ENCODE measurements at regions of chr3 and their contacts with region 1.

Region 1: DNA sequence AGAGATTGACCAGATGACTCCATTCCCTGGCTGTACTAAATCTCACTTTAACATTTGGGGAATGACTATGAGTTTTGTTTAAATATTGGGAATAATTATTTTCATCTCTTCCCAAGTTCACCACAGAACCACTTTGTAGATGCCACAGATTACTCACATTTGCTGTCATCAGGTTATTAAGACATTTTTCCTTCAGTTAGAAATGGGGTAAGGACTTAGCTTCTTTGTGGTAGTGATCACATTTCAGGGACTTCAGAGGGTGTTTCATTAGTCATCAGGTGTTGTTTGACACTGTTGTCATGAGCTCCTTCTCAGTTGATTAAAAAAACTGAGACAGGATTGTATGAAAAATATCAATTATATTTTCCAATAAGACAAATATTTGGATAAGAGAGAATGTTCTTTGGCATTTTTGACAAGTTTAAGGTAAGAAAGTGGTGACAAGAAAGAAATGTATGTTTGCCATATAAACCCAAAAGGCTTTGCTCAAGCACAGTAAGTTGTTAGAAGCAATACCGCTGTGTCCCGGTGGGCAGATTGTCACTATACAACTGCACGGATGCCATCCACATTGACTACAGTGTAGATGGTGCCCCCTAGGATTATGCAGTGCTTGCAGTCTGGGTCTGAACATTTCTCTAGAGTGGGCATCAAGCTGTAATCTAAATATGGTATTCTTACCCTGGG is 22.3 kb downstream of the FBXL2 start:
- DNase-seq: no peak
- H3K4me3 ChIP-seq: no peak overlapping the region
- H3K27ac ChIP-seq: no peak overlapping the region
- H3K4me1 ChIP-seq: no peaks in the 10 kb centered on the region
- H3K27me3 ChIP-seq: no peaks in the 10 kb centered on the region
- CTCF ChIP-seq: no peak
- EP300 ChIP-seq: no peak
- POLR2A ChIP-seq: no peak

Region 2: GRCh38 chr3:33287672-33288282 is 11.8 kb before region 1 on chr3:
- intact Hi-C with region 1: no loop called
- DNase-seq: no peak
- H3K4me3 ChIP-seq: no peak overlapping the region
- H3K27ac ChIP-seq: no peak overlapping the region
- H3K4me1 ChIP-seq: no peaks in the 10 kb centered on the region
- H3K27me3 ChIP-seq: no peaks in the 10 kb centered on the region
- CTCF ChIP-seq: no peak
- EP300 ChIP-seq: no peak
- POLR2A ChIP-seq: no peak

Region 3: DNA sequence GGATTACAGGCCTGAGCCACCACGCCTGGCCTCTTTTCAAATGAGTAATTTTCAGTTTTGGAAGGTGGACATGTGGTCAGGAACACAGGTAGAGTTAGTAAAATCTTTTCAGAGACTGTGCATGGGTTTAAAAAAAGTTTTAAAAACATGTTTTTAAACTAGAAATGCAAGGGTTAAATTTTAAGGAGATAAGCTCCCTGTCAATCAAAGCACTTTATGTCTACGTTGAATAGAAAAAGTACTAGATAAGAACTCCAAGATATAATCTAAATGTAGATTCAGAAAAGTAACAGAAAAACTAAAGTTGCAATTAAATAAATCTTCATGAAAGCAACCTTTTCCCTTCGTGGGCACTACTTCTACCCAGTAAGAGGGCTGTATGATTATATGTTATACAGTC is 286.9 kb after region 1 on chr3:
- intact Hi-C with region 1: loop called in 1 of 4 experiments (anchors 5 kb)
- DNase-seq: no peak
- H3K4me3 ChIP-seq: no peak overlapping the region
- H3K27ac ChIP-seq: no peak overlapping the region
- H3K4me1 ChIP-seq: no peaks in the 10 kb centered on the region
- H3K27me3 ChIP-seq: no peaks in the 10 kb centered on the region
- CTCF ChIP-seq: no peak
- EP300 ChIP-seq: no peak
- POLR2A ChIP-seq: no peak

Region 4: GRCh38 chr3:35275768-35276167 is 1976.2 kb after region 1 on chr3:
- intact Hi-C with region 1: no loop called
- DNase-seq: no peak
- H3K4me3 ChIP-seq: no peak overlapping the region
- H3K27ac ChIP-seq: no peak overlapping the region
- H3K4me1 ChIP-seq: no peaks in the 10 kb centered on the region
- H3K27me3 ChIP-seq: no peaks in the 10 kb centered on the region
- CTCF ChIP-seq: no peak
- EP300 ChIP-seq: no peak
- POLR2A ChIP-seq: no peak

Measured in ovary (tissue), 10 donors.